WTC11 (cell line): ENCODE measurements at regions of chr7 and their contacts with region 1.

Region 1: GRCh38 chr7:31122649-31123058 is 70.5 kb downstream of the ADCYAP1R1 start:
- DNase-seq: peak; percentile 78
- ATAC-seq: peak; percentile 91
- H3K4me3 Mint-ChIP-seq: no peak overlapping the region
- H3K27ac Mint-ChIP-seq: peak overlapping the region; percentile 34; the same call in 1 of the 2 replicates
- H3K4me1 Mint-ChIP-seq: peaks cover 8% of the 10 kb centered on the region
- H3K27me3 Mint-ChIP-seq: peaks cover 7% of the 10 kb centered on the region; the same call in 1 of the 2 replicates
- CTCF ChIP-seq: peak; percentile 60

Region 2: GRCh38 chr7:30911561-30911969 is 211.1 kb before region 1 on chr7 and contains the start of gene AQP1:
- CTCF ChIA-PET with region 1: interaction called, 16 read pairs
- POLR2A ChIA-PET with region 1: no interaction called
- DNase-seq: no peak
- ATAC-seq: no peak
- H3K4me3 Mint-ChIP-seq: no peak within 1 kb of the TSS
- H3K27ac Mint-ChIP-seq: no peak within 1 kb of the TSS
- H3K4me1 Mint-ChIP-seq: peaks cover 14% of the 10 kb centered on the region
- H3K27me3 Mint-ChIP-seq: no peaks in the 10 kb centered on the region
- CTCF ChIP-seq: no peak
- total RNA-seq, gene AQP1: 0.81 to 1.4 TPM (median 1.1 TPM) in 3 replicates

Region 3: GRCh38 chr7:30983042-30983913 is 139.4 kb before region 1 on chr7:
- CTCF ChIA-PET with region 1: interaction called, 882 read pairs
- POLR2A ChIA-PET with region 1: interaction called, 21 read pairs
- DNase-seq: peak; percentile 97
- ATAC-seq: peak; percentile 62
- H3K4me3 Mint-ChIP-seq: peak overlapping the region; percentile 67
- H3K27ac Mint-ChIP-seq: no peak overlapping the region
- H3K4me1 Mint-ChIP-seq: peaks cover 53% of the 10 kb centered on the region
- H3K27me3 Mint-ChIP-seq: peaks cover 7% of the 10 kb centered on the region
- CTCF ChIP-seq: peak; percentile 90

Region 4: GRCh38 chr7:31027161-31027965 is 95.3 kb before region 1 on chr7:
- CTCF ChIA-PET with region 1: interaction called, 30 read pairs
- POLR2A ChIA-PET with region 1: no interaction called
- DNase-seq: peak; percentile 56
- ATAC-seq: peak; percentile 76
- H3K4me3 Mint-ChIP-seq: no peak overlapping the region
- H3K27ac Mint-ChIP-seq: no peak overlapping the region
- H3K4me1 Mint-ChIP-seq: peaks cover 30% of the 10 kb centered on the region
- H3K27me3 Mint-ChIP-seq: peaks cover 1% of the 10 kb centered on the region; the same call in 1 of the 2 replicates
- CTCF ChIP-seq: no peak

Region 5: GRCh38 chr7:31058122-31058521 is 64.5 kb before region 1 on chr7:
- CTCF ChIA-PET with region 1: interaction called, 127 read pairs
- POLR2A ChIA-PET with region 1: no interaction called
- DNase-seq: no peak
- ATAC-seq: no peak
- H3K4me3 Mint-ChIP-seq: no peak overlapping the region
- H3K27ac Mint-ChIP-seq: no peak overlapping the region
- H3K4me1 Mint-ChIP-seq: peaks cover 34% of the 10 kb centered on the region
- H3K27me3 Mint-ChIP-seq: peaks cover 15% of the 10 kb centered on the region
- CTCF ChIP-seq: no peak

Region 6: DNA sequence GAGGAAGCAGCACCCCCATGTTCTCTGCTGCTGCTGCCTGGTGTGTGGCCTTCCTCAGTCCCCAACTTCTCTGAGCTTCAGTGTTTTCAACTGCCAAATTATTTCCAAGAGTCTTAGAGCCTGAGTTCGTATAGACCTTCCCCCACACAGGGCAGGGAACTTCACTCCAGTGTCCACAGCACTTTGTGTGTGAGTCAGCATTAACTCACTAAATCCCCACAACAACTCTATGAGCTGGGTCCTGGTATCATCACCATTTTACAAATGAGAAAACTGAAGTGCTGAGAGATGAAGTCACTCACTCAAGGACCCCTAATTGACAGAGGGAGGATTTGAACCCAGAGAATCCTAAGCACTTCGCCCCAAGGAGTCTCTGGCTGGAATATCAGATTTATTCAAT is 22.2 kb before region 1 on chr7:
- CTCF ChIA-PET with region 1: interaction called, 24 read pairs
- POLR2A ChIA-PET with region 1: no interaction called
- DNase-seq: no peak
- ATAC-seq: no peak
- H3K4me3 Mint-ChIP-seq: no peak overlapping the region
- H3K27ac Mint-ChIP-seq: no peak overlapping the region
- H3K4me1 Mint-ChIP-seq: no peaks in the 10 kb centered on the region
- H3K27me3 Mint-ChIP-seq: no peaks in the 10 kb centered on the region
- CTCF ChIP-seq: no peak